ENCODE measurements at regions of chr3 and their contacts with region 1.

Region 1: DNA sequence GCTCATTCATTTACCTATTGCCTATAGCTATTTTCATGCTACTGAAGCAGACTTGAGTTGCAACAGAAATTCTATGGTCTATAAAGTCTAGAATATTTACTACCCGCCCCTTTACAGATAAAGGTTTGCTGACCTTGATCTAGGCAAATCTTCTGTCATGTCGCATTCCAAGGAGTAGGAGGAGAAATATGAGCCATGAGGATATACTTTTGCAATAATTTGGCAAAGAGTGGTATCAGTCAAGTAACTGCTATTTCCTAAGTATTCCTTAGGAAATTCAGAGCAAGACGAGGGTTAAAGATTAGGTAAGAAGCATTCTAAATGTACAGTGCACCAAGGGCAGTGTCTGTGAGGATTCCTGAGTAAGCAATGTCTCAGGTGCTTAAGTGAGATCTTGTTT is 121.0 kb upstream of the NUDT16 start:
- DNase-seq: no peak
- H3K4me3 ChIP-seq: no peak overlapping the region
- H3K4me3 Mint-ChIP-seq: no peak overlapping the region
- H3K27ac ChIP-seq: no peak overlapping the region
- H3K27ac Mint-ChIP-seq: no peak overlapping the region
- H3K4me1 ChIP-seq: no peaks in the 10 kb centered on the region
- H3K4me1 Mint-ChIP-seq: peaks cover 0 to 2% (median 0%) of the 10 kb centered on the region in 4 donors
- H3K27me3 ChIP-seq: no peaks in the 10 kb centered on the region
- H3K27me3 Mint-ChIP-seq: no peaks in the 10 kb centered on the region

Region 2: DNA sequence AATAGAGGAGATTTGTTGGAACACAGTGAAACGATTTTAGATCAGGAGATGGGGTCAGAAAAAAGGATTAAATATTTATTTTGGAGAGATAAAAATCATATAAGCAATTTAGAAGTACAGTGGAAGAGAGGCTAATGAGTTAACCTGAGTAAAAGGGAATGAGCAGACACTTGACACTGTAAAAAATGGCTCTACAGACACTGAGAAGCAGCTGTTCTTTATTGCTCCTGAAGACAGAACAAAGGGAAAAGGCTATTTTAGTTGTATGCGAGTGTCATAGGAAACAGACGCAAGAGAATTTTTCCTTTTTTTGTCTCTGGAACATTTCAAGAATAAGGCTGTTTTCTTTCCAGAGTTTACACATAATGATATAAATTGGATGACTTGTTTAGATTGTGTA is 268.2 kb before region 1 on chr3:
- CTCF ChIA-PET with region 1: no interaction called
- POLR2A ChIA-PET with region 1: no interaction called
- intact Hi-C with region 1: loop called (anchors 5 kb)
- DNase-seq: no peak
- H3K4me3 ChIP-seq: no peak overlapping the region
- H3K4me3 Mint-ChIP-seq: no peak overlapping the region
- H3K27ac ChIP-seq: no peak overlapping the region
- H3K27ac Mint-ChIP-seq: peak overlapping the region in 2 of 7 donors; percentile 2 to 50
- H3K4me1 ChIP-seq: no peaks in the 10 kb centered on the region
- H3K4me1 Mint-ChIP-seq: peaks cover 0 to 3% (median 1%) of the 10 kb centered on the region in 4 donors
- H3K27me3 ChIP-seq: no peaks in the 10 kb centered on the region
- H3K27me3 Mint-ChIP-seq: no peaks in the 10 kb centered on the region

Measured in CD4-positive, alpha-beta memory T cell (primary cell).